Heart right ventricle (tissue), 16 donors: ENCODE measurements at regions of chr12 and their contacts with region 1.

Region 1: DNA sequence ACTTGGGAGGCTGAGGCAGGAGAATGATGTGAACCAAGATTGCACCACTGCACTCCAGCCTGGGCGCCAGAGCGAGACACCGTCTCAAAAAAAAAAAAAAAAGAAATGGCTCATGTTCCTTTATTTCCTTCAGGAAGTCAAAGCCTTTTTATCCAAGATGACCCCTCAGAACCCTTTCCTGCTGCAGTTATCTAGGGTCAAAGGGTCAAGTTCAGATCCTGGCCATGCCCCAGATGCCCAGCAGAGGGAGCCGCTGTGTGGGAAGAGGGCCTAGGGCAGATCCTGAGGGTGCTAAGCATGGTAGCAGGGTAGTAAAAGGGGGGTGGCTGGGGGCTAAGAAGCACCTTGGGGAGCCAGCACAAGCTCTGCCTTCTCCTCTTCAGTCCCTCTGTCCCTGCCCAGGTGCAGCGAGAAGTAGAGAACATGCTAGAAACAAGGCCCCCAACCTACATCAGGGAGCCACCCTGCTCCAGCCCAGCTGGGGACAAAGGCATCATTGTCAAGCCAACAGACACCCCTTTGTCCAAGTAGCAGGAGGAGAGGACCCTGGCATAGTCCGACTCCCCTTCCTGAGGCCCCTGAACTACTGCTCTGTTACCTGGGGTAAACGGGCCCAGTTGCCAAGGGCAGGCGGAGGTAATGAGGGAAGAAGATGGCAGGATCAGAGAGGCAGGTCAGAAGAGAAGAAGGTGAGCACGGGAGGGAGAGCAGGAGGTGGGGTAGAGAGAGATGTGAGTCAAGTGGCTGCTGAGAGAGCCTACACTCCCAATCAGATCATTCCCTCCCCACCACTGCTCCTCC is 6.5 kb downstream of the NFE2 start:
- DNase-seq: peak in 1 of 2 donors; percentile 58
- ATAC-seq: peak in 7 of 8 donors; percentile 32 to 70 (median 59)
- H3K4me3 ChIP-seq: peak overlapping the region in 1 of 10 donors; percentile 20
- H3K27ac ChIP-seq: peak overlapping the region in 1 of 10 donors; percentile 38
- H3K4me1 ChIP-seq: peaks cover 0 to 8% (median 0%) of the 10 kb centered on the region in 9 donors
- H3K27me3 ChIP-seq: peaks cover 4 to 13% (median 9%) of the 10 kb centered on the region in 7 donors
- CTCF ChIP-seq: peak in 8 of 9 donors; percentile 10 to 75 (median 63)

Region 2: GRCh38 chr12:54220092-54220557 is 74.2 kb before region 1 on chr12:
- intact Hi-C with region 1: loop called in 2 of 10 experiments (anchors 5 to 10 kb)
- DNase-seq: peak; percentile 54 to 64
- ATAC-seq: peak; percentile 14 to 77 (median 55)
- H3K4me3 ChIP-seq: no peak overlapping the region
- H3K27ac ChIP-seq: no peak overlapping the region
- H3K4me1 ChIP-seq: peaks cover 0 to 38% (median 24%) of the 10 kb centered on the region in 9 donors
- H3K27me3 ChIP-seq: peaks cover 0 to 36% (median 9%) of the 10 kb centered on the region in 7 donors
- CTCF ChIP-seq: peak; percentile 59 to 82 (median 76)

Region 3: DNA sequence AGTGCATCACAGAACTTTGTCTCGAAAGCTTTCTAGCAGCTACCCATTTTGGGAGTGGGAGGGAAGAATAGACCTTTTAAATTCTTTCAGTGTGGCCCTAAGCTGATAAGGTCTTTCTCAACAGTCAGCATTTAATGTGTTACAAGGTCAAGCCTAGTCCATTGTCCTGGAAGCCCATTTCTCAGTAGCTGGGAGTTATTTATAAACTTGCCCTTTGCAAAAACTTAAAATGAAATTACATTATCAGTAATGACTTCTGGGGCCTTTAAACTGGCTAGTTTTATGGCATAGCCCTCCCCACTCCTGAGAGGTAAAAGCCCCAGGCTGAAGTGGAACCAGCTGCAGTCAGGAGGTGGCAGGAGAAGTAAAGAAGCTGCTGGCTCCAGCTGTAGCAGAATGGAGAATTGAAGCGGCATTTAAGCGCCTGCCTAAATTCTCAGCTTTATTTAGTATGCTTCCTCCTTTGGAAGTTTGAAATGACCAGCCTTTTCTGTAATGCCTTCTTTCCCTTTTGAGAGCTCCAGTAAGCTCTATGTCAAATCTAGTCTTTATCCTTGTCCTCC is 43.0 kb after region 1 on chr12:
- intact Hi-C with region 1: no loop called
- DNase-seq: no peak
- ATAC-seq: peak; percentile 64 to 88 (median 78)
- H3K4me3 ChIP-seq: no peak overlapping the region
- H3K27ac ChIP-seq: peak overlapping the region in 9 of 10 donors; percentile 24 to 78 (median 69)
- H3K4me1 ChIP-seq: peaks cover 16 to 57% (median 32%) of the 10 kb centered on the region in 9 donors
- H3K27me3 ChIP-seq: no peaks in the 10 kb centered on the region
- CTCF ChIP-seq: peak in 5 of 9 donors; percentile 14 to 56 (median 43)